Ovary (tissue), 10 donors: ENCODE measurements at regions of chr4 and their contacts with region 1.

Region 1: DNA sequence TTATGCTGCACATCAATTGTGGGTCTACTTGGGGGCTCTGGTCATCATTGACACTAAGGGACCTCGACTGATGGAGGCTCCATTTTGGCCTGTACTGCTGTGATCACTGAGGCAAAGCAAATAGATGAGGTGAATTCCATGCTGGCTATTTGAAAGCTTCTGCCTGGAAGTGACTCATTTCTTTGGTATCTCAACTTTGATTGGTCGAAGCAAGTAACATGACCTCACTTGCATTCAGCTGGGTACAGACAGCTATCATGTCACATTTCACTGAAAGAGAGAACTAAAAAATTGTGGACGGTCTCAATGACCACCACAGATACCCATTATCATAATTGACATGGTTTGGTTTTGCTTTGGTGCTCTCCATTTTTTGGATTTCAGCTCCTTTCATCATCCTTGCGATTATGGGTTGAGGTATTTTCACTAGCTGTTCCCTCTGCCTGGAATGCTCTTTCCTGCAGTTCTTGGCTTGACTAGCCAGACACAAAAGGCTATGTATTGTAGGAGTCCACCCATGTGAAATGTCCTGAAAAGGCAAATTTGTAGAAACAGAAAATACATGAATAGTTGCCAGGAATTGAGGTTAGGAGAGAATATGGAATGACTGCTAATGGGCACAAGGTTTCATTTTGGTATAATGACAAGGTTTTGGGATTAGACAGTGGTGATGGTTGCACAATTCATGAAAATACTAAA is 369.2 kb upstream of the LCORL start:
- DNase-seq: no peak
- H3K4me3 ChIP-seq: no peak overlapping the region
- H3K27ac ChIP-seq: no peak overlapping the region
- H3K4me1 ChIP-seq: no peaks in the 10 kb centered on the region
- H3K27me3 ChIP-seq: no peaks in the 10 kb centered on the region
- CTCF ChIP-seq: no peak
- EP300 ChIP-seq: no peak
- POLR2A ChIP-seq: no peak

Region 2: DNA sequence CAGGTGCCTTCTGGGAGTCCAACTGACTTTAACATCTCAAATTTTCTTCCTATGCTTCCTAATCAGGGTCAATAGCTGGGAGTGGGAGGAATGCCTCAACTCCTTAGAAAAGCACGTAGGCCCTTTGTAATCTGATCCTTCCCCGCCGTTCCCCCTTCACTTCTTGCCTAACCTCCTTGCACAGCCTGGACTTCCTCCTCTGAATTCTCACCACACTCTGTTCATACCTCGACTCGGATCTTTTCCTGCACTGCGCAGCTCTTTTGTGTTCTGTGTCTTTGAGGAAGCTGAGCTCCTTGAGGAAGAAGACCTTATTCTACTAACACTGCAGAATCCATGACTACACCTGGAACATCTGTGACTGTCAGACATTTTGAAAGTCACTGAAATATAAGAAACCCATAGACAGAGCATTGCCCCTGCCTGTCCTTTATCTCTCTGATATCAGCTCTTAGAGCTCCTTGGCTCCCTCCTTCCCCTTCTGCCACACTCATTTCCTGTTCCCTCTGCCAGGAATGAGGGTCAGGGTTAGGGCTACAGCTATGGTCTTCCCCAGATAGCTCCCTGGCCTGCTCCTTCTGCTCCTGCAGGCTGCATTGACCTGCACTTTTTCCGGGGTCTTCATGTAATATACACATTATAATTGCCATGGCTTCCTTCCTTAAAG is 1352.2 kb before region 1 on chr4:
- intact Hi-C with region 1: loop called in 1 of 4 experiments (anchors 5 kb)
- DNase-seq: no peak
- H3K4me3 ChIP-seq: no peak overlapping the region
- H3K27ac ChIP-seq: no peak overlapping the region
- H3K4me1 ChIP-seq: no peaks in the 10 kb centered on the region
- H3K27me3 ChIP-seq: no peaks in the 10 kb centered on the region
- CTCF ChIP-seq: no peak
- EP300 ChIP-seq: no peak
- POLR2A ChIP-seq: no peak

Region 3: DNA sequence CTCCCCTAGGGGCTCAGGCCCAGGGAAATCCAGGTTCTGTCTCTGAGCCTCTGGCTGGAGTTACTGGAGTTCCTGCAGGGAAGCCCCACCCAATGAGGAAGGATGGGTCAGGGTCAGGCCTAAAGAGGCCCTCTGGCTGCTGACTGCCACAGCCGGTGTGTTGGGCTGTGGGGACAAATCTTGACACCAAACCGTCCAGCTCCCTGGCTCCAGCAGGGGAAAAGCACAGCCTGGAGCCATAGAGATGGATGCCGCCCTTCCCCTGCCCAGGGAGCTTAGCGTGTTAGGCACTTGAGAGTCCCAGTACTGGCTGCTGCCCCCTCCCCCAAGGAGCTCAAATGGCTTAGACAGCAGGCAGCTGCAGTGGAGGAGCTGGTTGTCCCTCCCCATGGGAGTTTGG is 48.0 kb before region 1 on chr4:
- intact Hi-C with region 1: no loop called
- DNase-seq: no peak
- H3K4me3 ChIP-seq: no peak overlapping the region
- H3K27ac ChIP-seq: no peak overlapping the region
- H3K4me1 ChIP-seq: no peaks in the 10 kb centered on the region
- H3K27me3 ChIP-seq: no peaks in the 10 kb centered on the region
- CTCF ChIP-seq: no peak
- EP300 ChIP-seq: no peak
- POLR2A ChIP-seq: no peak